GM10248 (cell line): ENCODE measurements at regions of chr7 and their contacts with region 1.

Region 1: DNA sequence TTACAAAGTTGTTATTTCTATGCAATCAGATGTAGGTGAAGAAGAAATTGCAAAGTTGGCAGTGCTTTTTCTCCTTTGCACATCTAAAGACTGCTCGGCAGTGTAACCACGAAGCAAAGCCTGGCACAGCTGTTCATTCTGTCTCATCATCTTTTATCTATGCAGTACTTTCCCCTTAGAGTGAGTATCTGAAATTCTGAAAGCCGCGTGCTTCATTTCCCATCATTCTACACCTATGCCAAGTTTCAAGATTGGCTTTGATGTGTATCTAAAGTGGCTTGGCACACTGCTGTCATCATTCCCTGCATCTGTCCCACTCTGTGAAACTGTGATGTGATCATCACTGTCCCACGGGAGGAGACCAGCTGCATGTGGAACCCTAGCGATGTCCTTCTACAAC is 15.2 kb downstream of the SOSTDC1 start:
- DNase-seq: no peak
- CTCF ChIP-seq: no peak

Region 2: DNA sequence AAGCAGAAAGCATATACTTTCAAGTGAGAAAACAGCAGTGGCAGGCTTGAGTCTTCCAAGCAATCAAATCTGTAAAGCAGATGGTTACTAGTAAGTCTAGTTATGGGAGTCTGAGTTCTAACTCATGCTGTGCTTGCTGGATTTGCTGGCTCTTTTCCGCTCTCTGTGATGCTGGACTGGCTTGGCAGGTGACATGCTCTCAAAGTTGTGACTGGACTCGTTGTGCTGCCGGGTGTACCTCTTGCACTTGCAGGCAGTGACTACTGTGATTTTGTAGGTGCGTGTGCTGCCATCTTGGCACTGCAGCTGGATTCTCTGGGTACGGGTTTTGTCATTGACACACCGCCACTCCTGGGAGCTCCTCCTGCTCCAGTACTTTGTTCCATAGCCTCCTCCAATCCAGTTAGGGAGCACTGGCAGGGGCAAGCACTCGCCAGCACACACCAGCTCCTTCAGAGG is 12.1 kb after region 1 on chr7:
- CTCF ChIA-PET with region 1: interaction called, 12 read pairs
- POLR2A ChIA-PET with region 1: no interaction called
- DNase-seq: no peak
- CTCF ChIP-seq: no peak

Region 3: DNA sequence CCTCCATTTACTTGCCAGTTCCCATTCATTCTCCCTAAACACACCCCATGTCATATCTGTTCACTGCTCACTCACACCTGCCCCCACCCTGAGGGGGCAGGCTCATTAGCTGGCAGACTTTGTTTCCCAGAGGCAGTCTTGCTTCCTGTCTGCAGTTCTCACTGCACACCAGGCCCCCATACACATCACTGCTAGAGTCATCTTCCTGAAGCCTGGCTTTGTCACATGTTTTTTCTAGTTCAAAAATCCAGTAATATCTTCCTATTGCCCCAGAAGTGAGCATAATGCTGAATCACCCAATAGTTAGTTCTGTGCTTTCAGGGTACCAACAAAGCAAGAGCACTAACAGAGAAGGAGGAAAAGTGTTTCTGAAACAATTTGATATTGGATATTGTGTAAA is 78.2 kb after region 1 on chr7:
- CTCF ChIA-PET with region 1: no interaction called
- POLR2A ChIA-PET with region 1: no interaction called
- DNase-seq: no peak
- CTCF ChIP-seq: no peak